Dorsolateral prefrontal cortex (tissue), 120 donors: ENCODE measurements at regions of chr12 and their contacts with region 1.

Region 1: DNA sequence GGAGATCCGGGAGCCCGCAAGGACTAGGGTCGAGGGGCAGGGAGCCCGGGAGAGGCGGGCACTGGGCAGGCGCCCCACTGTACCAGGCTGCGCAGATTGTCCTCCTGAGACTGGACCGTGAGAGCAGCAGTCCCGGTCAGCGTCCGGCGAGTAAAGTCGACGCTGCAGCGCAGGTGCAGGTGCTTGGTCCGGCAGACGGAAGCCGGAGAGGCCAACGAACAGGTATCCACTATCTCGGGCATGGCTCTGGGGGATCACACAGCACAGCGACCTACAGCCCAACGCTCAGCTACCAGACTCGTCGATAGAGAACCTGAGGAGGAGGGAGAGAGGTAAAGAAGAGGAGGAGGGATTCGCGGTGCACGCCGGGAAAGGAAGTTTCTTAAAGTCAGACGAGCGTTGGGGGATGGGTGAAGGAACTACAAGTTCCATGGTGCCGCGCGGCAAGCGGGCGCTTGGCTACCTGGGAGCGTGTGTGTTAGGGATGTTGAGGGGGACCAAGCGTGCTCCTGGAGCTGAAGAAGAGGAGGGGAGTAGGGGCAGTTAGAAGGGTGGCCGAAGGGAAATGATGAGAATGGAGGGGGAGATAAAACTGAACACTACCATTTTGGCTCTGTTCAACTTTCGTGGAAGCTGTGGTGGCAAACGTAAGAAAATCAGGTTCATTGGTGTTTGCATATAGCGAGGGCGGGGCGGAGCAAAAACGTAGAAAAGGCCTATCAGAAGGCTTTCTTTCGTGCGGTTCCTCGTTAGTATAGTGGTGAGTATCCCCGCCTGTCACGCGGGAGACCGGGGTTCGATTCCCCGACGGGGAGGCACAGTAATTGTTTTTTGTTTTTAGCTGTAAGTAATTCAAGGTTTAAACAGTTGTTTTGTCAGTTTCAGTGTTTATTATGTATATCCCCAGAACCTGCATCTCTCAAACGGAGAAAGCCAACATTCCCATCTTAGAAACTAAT is at the start of gene LTA4H:
- DNase-seq: peak; percentile 95 to 99 (median 97)
- H3K4me3 ChIP-seq: peak within 1 kb of the TSS; percentile 57 to 99 (median 93)
- H3K27ac ChIP-seq: peak within 1 kb of the TSS; percentile 21 to 95 (median 86)
- H3K27me3 ChIP-seq: no peaks in the 10 kb centered on the region
- CTCF ChIP-seq: peak in 22 of 56 donors; percentile 4 to 41 (median 12)
- total RNA-seq, gene LTA4H: 23.3 to 51.5 (median 38.7) TPM

Region 2: GRCh38 chr12:95473884-95474659 is 561.5 kb before region 1 on chr12 and contains the start of gene METAP2:
- intact Hi-C with region 1: loop called in 1 of 2 experiments (anchors 10 kb)
- DNase-seq: peak; percentile 92 to 98 (median 96)
- H3K4me3 ChIP-seq: peak within 1 kb of the TSS; percentile 65 to 100 (median 96)
- H3K27ac ChIP-seq: peak within 1 kb of the TSS; percentile 59 to 97 (median 91)
- H3K27me3 ChIP-seq: no peaks in the 10 kb centered on the region
- CTCF ChIP-seq: peak in 36 of 56 donors; percentile 4 to 55 (median 25)
- total RNA-seq, gene METAP2: 38.9 to 82.5 (median 54.8) TPM

Region 3: GRCh38 chr12:95858479-95859343 is 176.8 kb before region 1 on chr12 and contains the start of gene SNRPF:
- intact Hi-C with region 1: loop called in 1 of 2 experiments (anchors 5 kb)
- DNase-seq: peak; percentile 89 to 97 (median 95)
- H3K4me3 ChIP-seq: peak within 1 kb of the TSS; percentile 58 to 99 (median 86)
- H3K27ac ChIP-seq: peak within 1 kb of the TSS in 53 of 59 donors; percentile 0 to 91 (median 69)
- H3K27me3 ChIP-seq: no peaks in the 10 kb centered on the region
- CTCF ChIP-seq: peak in 39 of 56 donors; percentile 9 to 57 (median 35)
- total RNA-seq, gene SNRPF: 8.8 to 28.7 (median 18.1) TPM

Region 4: DNA sequence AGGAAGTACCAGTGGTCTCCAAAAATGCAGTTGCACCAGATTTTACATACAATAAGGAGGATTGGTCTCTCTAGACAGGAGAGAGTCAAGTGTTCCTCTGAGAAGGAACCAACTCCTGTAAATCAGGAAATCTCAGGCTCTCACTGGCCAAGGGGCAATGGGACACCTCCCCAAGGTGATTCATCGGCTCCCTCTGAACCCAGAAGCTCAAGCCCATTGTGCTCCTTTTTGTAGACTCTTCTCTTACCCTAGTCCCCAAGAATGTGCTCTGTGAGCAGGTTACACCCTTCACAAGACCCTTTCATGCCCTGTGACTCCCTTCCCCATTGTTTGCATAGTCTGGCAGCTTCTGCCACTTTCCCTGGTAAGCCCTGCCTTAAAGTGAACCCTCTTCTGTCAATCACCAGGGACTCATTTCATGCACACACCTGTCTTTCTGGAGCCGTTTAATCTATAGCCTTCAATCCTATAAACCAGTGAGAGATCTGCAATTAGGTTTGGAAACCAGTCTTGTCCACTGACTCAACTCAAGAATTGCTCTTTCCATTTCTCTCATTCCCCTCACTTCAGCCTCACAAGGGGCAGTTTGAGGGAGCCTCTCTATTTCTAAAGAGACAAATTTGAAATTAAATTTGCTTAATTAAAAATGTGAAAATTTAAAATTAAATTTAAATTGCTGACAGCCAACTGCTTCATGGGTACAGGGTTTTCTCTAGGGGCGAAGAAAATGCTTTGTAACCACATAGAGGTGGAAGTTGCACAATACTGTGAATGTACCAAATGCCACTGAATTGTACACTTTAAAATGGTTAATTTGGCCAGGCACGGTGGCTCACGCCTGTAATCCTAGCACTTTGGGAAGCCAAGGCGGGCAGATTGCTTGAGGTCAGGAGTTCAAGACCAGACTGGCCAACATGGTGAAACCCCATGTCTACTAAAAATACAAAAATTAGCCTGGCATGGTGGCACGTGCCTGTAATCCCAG is 38.1 kb after region 1 on chr12:
- intact Hi-C with region 1: no loop called
- DNase-seq: no peak
- H3K4me3 ChIP-seq: no peak overlapping the region
- H3K27ac ChIP-seq: no peak overlapping the region
- H3K27me3 ChIP-seq: peaks cover 0 to 5% (median 0%) of the 10 kb centered on the region in 45 donors
- CTCF ChIP-seq: no peak

Region 5: GRCh38 chr12:96323906-96324305 is 288.3 kb after region 1 on chr12:
- intact Hi-C with region 1: no loop called
- DNase-seq: no peak
- H3K4me3 ChIP-seq: peak overlapping the region in 1 of 59 donors; percentile 6
- H3K27ac ChIP-seq: peak overlapping the region in 40 of 59 donors; percentile 3 to 79 (median 54)
- H3K27me3 ChIP-seq: no peaks in the 10 kb centered on the region
- CTCF ChIP-seq: no peak